ENCODE measurements at regions of chr12 and their contacts with region 1.

Region 1: DNA sequence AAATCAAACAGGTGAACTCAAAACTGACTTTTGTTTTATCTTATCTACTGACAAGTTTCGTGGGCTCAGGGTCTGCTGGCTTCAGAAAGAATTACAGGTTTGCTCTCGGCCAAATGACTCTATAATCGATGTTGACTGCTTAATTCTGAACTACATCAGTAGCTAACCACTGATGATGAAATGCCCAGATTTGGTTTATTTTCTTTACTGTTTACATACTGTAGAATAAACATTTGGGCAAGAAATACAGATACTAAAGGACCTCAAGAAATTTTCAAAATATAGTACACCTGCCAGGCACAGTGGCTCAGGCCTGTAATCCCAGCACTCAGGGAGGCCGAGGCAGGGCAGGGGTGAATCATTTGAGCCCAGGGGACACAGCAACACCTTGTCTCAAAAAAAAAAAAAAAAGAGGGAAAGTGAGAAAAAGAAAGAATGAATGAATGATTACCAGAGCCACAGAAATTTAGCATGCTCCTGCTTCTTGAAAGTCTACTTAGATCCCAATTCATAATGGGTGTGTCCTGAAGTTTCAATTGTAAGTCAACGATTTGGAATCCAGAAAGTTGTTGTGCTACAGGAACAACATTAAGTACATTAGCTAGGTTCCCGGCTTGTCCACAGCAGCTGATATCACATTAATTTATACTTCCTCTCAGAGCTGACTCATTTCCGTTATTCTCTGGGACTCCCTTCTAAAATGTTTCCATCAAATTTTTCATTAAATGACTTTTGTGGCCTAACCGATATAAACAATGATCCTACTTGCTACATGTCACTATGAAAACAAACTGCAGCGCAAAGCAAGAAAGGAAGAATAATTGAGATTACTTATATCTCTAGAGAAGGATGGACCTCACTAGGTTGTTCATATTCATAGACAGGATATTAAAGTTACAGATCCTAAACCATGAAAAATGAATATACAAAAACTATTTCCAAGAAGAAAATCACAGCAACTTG is 134.3 kb downstream of the MED13L start:
- DNase-seq: no peak
- ATAC-seq: peak; percentile 66
- H3K4me3 Mint-ChIP-seq: peak overlapping the region; percentile 31
- H3K27ac Mint-ChIP-seq: peak overlapping the region; percentile 68
- H3K4me1 Mint-ChIP-seq: peaks cover 55% of the 10 kb centered on the region
- H3K27me3 Mint-ChIP-seq: no peaks in the 10 kb centered on the region

Region 2: DNA sequence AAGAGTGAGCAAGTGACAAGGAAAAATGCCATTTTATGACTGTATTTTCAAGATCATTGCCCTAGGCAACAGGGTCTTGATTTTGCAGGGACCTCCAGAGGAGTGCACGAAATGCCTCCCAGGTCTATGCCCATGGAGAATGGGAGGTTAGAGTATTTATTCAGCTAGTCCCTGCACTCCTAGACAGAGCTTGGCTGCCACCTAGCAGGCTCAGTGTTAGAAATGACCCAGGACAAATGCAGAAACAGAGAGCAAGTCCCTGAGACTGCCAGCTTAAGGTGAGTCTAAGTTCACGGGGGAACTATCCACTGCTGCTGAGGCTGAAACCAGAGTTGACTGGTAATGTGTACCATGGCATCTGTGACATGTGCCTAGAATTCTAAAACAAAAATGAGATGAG is 372.2 kb before region 1 on chr12:
- CTCF ChIA-PET with region 1: no interaction called
- POLR2A ChIA-PET with region 1: no interaction called
- intact Hi-C with region 1: no loop called
- DNase-seq: no peak
- ATAC-seq: no peak
- H3K4me3 Mint-ChIP-seq: no peak overlapping the region
- H3K27ac Mint-ChIP-seq: no peak overlapping the region
- H3K4me1 Mint-ChIP-seq: no peaks in the 10 kb centered on the region
- H3K27me3 Mint-ChIP-seq: peaks cover 6% of the 10 kb centered on the region

Region 3: GRCh38 chr12:116087962-116088361 is 55.3 kb before region 1 on chr12:
- CTCF ChIA-PET with region 1: no interaction called
- POLR2A ChIA-PET with region 1: no interaction called
- intact Hi-C with region 1: loop called (anchors 2 to 5 kb)
- DNase-seq: peak; percentile 13
- ATAC-seq: peak; percentile 71
- H3K4me3 Mint-ChIP-seq: peak overlapping the region; percentile 16
- H3K27ac Mint-ChIP-seq: peak overlapping the region; percentile 78
- H3K4me1 Mint-ChIP-seq: peaks cover 57% of the 10 kb centered on the region
- H3K27me3 Mint-ChIP-seq: no peaks in the 10 kb centered on the region

Region 4: DNA sequence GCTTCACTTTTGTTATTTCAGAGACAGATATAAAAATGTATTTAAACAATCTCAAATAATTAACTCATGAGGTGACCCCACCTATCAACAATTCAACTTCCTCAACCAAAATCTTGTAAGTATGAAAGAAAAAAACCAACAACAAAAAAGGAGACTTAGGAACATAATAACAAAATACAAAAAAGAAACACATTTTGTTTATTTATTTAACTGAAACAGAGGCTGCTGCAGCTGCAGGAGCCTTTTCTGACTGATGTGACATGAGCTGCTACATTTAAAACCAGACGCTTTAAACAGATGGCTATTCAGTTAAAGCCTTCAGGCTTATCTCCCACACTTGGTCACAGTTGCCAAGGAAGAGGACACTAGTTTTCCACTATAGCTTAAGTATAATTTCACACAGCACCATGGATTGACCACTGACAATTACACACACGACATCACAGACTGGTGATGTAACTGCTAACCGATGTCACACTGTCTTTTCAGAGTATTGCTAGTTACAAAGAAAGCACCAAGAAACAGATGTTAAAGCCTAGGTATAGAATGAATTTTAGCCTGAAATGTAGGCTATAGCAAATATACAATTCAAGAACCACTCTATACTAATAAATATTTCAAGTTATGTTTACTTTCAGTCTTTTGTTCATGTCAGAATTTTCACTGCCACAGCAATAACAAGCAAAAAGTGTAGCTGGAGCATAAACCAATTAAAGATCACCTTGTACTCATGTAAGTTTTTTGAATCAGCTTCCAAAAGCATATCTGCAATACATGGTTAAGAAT is 21.2 kb after region 1 on chr12:
- CTCF ChIA-PET with region 1: interaction called, 9 read pairs
- POLR2A ChIA-PET with region 1: interaction called, 8 read pairs
- intact Hi-C with region 1: loop called in 1 of 2 experiments (anchors 2 kb)
- DNase-seq: peak; percentile 24
- ATAC-seq: peak; percentile 34
- H3K4me3 Mint-ChIP-seq: no peak overlapping the region
- H3K27ac Mint-ChIP-seq: peak overlapping the region; percentile 78
- H3K4me1 Mint-ChIP-seq: peaks cover 49% of the 10 kb centered on the region
- H3K27me3 Mint-ChIP-seq: no peaks in the 10 kb centered on the region

Region 5: GRCh38 chr12:116172224-116172849 is 29.1 kb after region 1 on chr12:
- CTCF ChIA-PET with region 1: interaction called, 7 read pairs
- POLR2A ChIA-PET with region 1: no interaction called
- intact Hi-C with region 1: loop called (anchors 1 to 5 kb)
- DNase-seq: peak; percentile 73
- ATAC-seq: peak; percentile 99
- H3K4me3 Mint-ChIP-seq: peak overlapping the region; percentile 73
- H3K27ac Mint-ChIP-seq: peak overlapping the region; percentile 97
- H3K4me1 Mint-ChIP-seq: peaks cover 72% of the 10 kb centered on the region
- H3K27me3 Mint-ChIP-seq: no peaks in the 10 kb centered on the region

Region 6: GRCh38 chr12:116194935-116195431 is 51.8 kb after region 1 on chr12:
- CTCF ChIA-PET with region 1: interaction called, 4 read pairs
- POLR2A ChIA-PET with region 1: no interaction called
- intact Hi-C with region 1: loop called (anchors 2 to 5 kb)
- DNase-seq: peak; percentile 81
- ATAC-seq: peak; percentile 93
- H3K4me3 Mint-ChIP-seq: peak overlapping the region; percentile 40
- H3K27ac Mint-ChIP-seq: peak overlapping the region; percentile 69
- H3K4me1 Mint-ChIP-seq: peaks cover 66% of the 10 kb centered on the region
- H3K27me3 Mint-ChIP-seq: no peaks in the 10 kb centered on the region

Region 7: GRCh38 chr12:116236148-116236731 is 93.0 kb after region 1 on chr12:
- CTCF ChIA-PET with region 1: interaction called, 15 read pairs
- POLR2A ChIA-PET with region 1: no interaction called
- intact Hi-C with region 1: loop called (anchors 1 kb)
- DNase-seq: peak; percentile 66
- ATAC-seq: peak; percentile 60
- H3K4me3 Mint-ChIP-seq: peak overlapping the region; percentile 14
- H3K27ac Mint-ChIP-seq: peak overlapping the region; percentile 63
- H3K4me1 Mint-ChIP-seq: peaks cover 35% of the 10 kb centered on the region
- H3K27me3 Mint-ChIP-seq: no peaks in the 10 kb centered on the region

Region 8: DNA sequence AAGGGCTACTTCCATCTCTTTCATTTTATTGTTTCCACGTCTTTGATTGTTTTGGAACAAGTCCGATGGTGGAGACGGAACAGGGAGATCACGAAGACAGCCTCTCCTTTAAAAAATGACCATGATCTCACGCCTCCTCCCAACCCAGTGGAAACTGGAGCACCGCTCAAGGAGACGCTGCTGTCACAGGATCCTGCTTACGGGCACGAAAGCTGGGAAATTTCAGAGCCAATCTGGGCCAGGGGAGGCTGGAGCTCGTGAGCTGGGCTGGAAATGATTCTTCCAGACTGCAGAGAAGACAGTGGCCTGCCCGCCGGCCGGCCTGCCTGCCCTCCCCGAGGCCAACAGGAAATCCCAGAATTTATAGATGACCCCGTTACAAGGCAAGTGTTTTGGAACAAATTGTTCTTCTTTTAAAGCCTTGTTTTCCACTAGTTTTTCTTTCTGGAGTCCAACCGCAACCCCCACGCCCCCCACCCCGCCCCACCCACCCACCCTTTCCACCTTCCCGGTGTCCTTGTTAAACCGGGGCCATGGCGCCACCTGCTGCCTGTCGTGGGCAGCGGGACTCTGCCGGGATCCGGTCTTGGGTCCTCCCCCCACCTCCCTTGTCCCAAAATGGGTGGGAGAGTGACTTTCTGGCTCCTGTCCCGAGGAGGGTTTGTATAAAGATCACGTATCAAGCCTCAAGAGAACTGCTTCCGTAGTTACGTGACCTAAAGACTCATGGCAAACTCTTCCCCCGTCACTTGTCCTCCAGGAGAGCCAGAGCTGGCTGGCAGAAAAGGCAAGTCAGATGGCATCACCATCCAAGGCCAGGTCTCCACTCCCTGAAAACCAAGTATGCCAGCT is 456.3 kb after region 1 on chr12:
- CTCF ChIA-PET with region 1: interaction called, 5 read pairs
- POLR2A ChIA-PET with region 1: no interaction called
- intact Hi-C with region 1: loop called (anchors 1 to 5 kb)
- DNase-seq: peak; percentile 82
- ATAC-seq: peak; percentile 72
- H3K4me3 Mint-ChIP-seq: no peak overlapping the region
- H3K27ac Mint-ChIP-seq: no peak overlapping the region
- H3K4me1 Mint-ChIP-seq: peaks cover 18% of the 10 kb centered on the region
- H3K27me3 Mint-ChIP-seq: no peaks in the 10 kb centered on the region

Measured in activated CD4-positive, alpha-beta T cell treated with anti-CD3 and anti-CD28 coated beads for 36 hours (primary cell).